AG04449 (cell line): ENCODE measurements at regions of chr17 and their contacts with region 1.

Region 1: DNA sequence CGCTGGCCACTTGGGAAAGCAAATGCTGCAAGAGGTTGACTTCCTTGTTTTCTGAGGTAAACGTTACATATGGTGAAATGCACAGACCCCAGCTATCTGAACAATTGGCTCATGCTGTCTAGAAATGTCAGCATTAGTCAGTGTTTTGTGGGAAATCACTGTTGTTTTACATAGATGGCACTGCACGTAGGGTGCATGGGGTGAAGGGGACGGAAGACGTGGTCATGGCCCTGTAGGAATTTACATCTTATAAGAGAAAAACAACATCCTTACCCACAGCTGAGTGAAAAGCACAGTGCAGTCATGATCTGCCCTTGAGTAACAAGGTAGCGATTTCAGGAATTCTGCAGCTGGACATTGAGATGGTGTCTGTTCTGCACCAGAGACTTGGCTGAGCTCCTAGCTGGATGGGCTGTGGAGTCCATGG is 15.2 kb downstream of the RPTOR start:
- DNase-seq: peak; percentile 76
- H3K4me3 ChIP-seq: no peak overlapping the region
- CTCF ChIP-seq: no peak

Region 2: DNA sequence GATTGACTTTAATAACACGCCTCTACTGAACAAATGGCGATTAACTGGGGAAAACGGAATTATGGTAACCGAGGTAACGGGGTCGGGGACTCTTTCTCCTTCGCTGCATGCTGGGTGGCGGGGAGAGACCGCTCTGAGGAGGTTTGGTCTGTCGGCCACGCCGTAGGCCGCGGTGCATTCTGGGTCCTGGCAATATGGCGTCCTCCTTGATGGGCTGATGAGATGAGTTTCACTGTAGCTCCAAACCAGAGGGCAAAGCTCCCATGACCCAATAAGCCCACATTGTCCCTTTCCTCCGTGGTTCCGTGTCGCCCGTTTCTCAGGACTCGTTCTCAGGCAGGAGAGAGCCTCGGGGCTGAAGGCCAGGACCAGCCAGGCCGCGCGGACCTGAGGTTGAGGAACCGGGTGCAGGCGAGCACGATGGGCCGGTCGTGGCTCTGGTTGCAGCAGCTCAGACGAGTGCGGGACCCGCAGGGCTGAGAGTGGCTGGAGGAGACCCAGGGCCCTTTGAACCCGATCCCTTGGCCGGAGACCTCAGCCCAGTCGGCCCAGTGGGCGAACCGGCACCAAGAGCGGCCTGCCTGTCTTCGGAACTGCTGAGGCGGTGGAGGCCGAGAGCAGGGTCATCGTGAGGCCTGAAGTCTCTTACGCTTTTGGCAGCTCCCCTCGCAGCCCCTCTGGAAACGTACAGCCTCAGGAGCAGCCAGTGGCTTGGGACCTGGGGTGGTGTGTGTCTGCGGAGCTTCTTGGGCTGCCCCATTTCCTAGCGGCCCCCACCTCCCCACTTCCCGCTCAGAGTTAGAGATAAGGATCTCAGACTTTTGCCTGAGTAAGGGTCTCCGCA is 15.0 kb before region 1 on chr17 and contains the start of gene RPTOR:
- CTCF ChIA-PET with region 1: interaction called, 4 read pairs
- POLR2A ChIA-PET with region 1: interaction called, 11 read pairs
- DNase-seq: peak; percentile 46
- H3K4me3 ChIP-seq: peak within 1 kb of the TSS; percentile 97
- CTCF ChIP-seq: no peak

Region 3: GRCh38 chr17:80569924-80570323 is 10.1 kb after region 1 on chr17:
- CTCF ChIA-PET with region 1: interaction called, 94 read pairs
- POLR2A ChIA-PET with region 1: no interaction called
- DNase-seq: no peak
- H3K4me3 ChIP-seq: no peak overlapping the region
- CTCF ChIP-seq: no peak